ENCODE measurements at regions of chrX and their contacts with region 1.

Region 1: DNA sequence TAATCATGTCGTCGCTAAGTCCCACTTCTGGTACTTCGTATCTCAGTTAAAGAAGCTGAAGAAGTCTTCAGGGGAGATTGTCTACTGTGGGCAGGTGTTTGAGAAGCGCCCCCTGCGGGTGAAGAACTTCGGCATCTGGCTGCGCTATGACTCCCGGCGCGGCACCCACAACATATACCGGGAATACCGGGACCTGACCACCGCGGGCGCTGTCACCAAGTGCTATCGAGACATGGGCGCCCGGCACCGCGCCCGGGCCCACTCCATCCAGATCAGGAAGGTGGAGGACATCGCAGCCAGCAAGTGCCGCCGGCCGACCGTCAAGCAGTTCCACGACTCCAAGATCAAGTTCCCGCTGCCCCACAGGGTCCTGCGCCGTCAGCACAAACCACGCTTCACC is 11.3 kb downstream of the PNCK start:
- DNase-seq: peak; percentile 48
- ATAC-seq: peak; percentile 88
- H3K4me3 ChIP-seq: no peak overlapping the region
- H3K27ac ChIP-seq: no peak overlapping the region
- H3K4me1 ChIP-seq: 0 out of 2 replicates have a peak, but pooled peaks cover under 1% of the 10 kb centered on the region
- H3K27me3 ChIP-seq: peaks cover 0 to 14% of the 10 kb centered on the region in 2 experiments; a peak in 2 of 5 replicates
- CTCF ChIP-seq: peak; percentile 75
- EP300 ChIP-seq: no peak
- POLR2A ChIP-seq: no peak
- RAD21 ChIP-seq: peak; percentile 73

Region 2: DNA sequence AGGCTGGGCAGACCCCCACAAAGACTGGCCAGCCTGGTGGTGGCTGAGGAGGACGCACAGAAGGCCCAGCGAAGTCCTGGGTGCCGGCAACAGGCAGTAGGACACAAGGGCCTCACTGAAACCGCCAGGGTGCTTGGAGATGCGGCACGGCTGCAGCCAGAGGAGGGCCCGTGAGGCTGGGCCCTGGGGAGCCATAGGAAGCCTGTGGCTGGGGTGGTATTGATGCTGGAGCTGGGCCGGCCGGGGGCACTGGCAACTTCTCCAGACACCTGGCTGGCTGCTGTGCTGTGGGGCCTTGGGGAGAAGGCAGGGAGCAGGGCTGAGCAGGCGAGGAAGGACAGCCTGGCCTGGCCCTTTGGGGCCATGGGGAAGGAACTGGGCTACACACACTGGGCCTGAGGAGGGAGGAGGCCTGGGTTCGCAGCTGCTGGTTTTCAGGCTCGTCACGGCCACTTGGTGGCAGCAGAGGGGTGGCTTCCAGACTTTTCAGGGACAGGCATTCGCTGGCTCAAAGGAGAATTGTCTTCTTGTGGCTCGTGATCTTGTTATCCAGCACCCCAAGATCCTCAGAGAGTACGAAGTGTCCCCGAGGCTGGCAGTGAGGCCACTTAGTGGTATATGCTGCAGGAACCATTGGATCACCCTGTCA is 107.6 kb before region 1 on chrX:
- CTCF ChIA-PET with region 1: interaction called, 35 read pairs
- POLR2A ChIA-PET with region 1: no interaction called
- in situ Hi-C with region 1: loop called (anchors 5 kb)
- intact Hi-C with region 1: no loop called
- DNase-seq: peak; percentile 27
- ATAC-seq: peak; percentile 82
- H3K4me3 ChIP-seq: no peak overlapping the region
- H3K27ac ChIP-seq: no peak overlapping the region
- H3K4me1 ChIP-seq: peaks cover 5% of the 10 kb centered on the region; the same call in 1 of the 2 replicates
- H3K27me3 ChIP-seq: peaks cover 0 to 47% of the 10 kb centered on the region in 2 experiments; a peak in 3 of 5 replicates
- CTCF ChIP-seq: peak; percentile 81
- EP300 ChIP-seq: no peak
- POLR2A ChIP-seq: no peak
- RAD21 ChIP-seq: peak; percentile 48; the same call in 1 of the 2 replicates

Region 3: GRCh38 chrX:153687121-153688039 is 25.1 kb after region 1 on chrX and contains the start of gene SLC6A8:
- CTCF ChIA-PET with region 1: no interaction called
- POLR2A ChIA-PET with region 1: no interaction called
- in situ Hi-C with region 1: no loop called
- intact Hi-C with region 1: no loop called
- DNase-seq: peak; percentile 31
- ATAC-seq: peak; percentile 38
- H3K4me3 ChIP-seq: peak within 1 kb of the TSS; percentile 42 to 74 (median 68); a peak in 5 of 6 replicates
- H3K27ac ChIP-seq: peak within 1 kb of the TSS; percentile 76
- H3K4me1 ChIP-seq: peaks cover 34% of the 10 kb centered on the region
- H3K27me3 ChIP-seq: no peaks in the 10 kb centered on the region
- CTCF ChIP-seq: peak; percentile 57
- EP300 ChIP-seq: no peak
- POLR2A ChIP-seq: peak in 1 of 2 experiments; percentile 50; a peak in 1 of 4 replicates
- RAD21 ChIP-seq: no peak
- total RNA-seq, gene SLC6A8: 9.0 and 13.9 TPM in 2 replicates